ENCODE measurements at regions of chr1 and their contacts with region 1.

Region 1: DNA sequence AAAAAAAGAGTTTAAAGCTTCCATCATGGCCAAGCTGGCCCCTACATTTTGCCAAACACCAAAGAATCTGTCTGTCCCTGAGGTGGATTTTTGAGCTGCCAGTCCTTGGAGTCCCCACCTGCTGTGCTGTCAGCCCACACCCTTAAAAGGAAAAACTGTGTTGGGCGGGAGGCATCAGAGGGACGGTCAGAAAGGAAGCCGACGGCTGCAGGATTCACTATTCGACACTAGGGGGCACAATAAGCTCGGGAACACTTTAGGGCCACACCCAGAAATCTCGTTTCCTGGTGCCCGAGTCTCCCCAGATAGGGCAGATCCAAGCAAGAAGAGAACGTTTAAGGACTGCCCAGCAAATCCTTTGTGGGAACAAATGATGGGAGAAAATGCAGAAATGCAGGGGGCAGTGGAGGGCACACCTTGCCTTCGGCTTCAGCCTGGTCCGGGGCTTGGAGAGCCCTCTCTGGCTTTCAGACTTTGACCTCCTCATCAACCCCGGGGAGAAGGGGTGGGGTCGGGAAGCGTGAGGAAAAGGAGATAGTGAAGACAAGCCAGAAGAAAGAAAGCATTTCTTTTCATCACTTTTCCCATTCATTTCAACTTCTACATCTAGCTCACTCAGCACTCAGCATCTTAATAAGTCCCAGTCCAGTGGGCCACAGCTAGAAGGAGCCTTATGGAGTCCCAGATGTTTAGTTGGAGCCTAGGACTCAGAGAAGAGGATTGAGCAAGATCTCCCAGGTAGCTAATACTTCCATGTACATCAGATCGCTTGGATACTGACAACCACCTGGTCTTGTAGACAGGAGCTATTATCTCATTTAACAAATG is 5.0 kb upstream of the CTTNBP2NL start:
- DNase-seq: peak; percentile 85 to 86
- H3K4me3 ChIP-seq: peak overlapping the region; percentile 40
- H3K4me3 Mint-ChIP-seq: peak overlapping the region; percentile 92
- H3K27ac Mint-ChIP-seq: peak overlapping the region; percentile 73
- H3K4me1 ChIP-seq: peaks cover 13% of the 10 kb centered on the region
- H3K4me1 Mint-ChIP-seq: peaks cover 14% of the 10 kb centered on the region
- H3K27me3 ChIP-seq: no peaks in the 10 kb centered on the region
- H3K27me3 Mint-ChIP-seq: no peaks in the 10 kb centered on the region
- CTCF ChIP-seq: peak; percentile 57 to 72

Region 2: DNA sequence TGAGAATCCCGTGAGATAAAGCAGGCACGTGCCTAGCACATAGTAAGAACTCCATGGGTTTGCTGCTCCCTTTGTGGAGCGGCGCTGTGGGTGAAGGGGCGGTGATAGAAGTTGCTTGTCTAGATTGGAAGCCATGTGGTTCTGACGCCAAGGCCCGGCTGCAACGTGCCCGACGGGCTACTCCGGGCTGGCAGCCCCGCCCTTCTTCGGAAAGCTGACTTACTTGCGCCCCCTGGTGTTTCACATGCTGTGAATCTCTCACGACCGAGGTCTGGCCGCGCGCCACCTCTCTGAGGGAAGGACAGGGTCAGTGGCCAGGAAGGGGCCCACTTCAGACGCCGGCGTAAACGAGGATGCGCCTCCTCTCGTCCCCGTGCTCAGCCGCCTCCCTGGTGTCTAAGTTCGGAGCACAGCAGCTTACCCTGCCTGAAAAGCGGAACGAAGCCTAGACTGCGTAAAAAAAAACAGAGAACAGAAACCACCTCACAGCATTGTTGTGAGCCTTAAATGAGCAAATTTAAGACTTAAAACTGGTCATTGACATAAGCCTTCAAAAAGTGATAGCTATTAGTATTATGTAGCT is 75.2 kb after region 1 on chr1:
- CTCF ChIA-PET with region 1: interaction called, 7 read pairs
- POLR2A ChIA-PET with region 1: no interaction called
- intact Hi-C with region 1: loop called (anchors 1 kb)
- DNase-seq: peak; percentile 87 to 90
- H3K4me3 ChIP-seq: peak overlapping the region; percentile 21; the same call in 1 of the 2 replicates
- H3K4me3 Mint-ChIP-seq: peak overlapping the region; percentile 61
- H3K27ac Mint-ChIP-seq: no peak overlapping the region
- H3K4me1 ChIP-seq: peaks cover 5% of the 10 kb centered on the region; the same call in 1 of the 2 replicates
- H3K4me1 Mint-ChIP-seq: peaks cover 8% of the 10 kb centered on the region
- H3K27me3 ChIP-seq: no peaks in the 10 kb centered on the region
- H3K27me3 Mint-ChIP-seq: no peaks in the 10 kb centered on the region
- CTCF ChIP-seq: peak; percentile 67 to 76

Region 3: GRCh38 chr1:112614460-112615065 is 223.6 kb after region 1 on chr1:
- CTCF ChIA-PET with region 1: interaction called, 3 read pairs
- POLR2A ChIA-PET with region 1: no interaction called
- intact Hi-C with region 1: loop called (anchors 1 kb)
- DNase-seq: peak in 1 of 2 experiments; percentile 27
- H3K4me3 ChIP-seq: no peak overlapping the region
- H3K4me3 Mint-ChIP-seq: no peak overlapping the region
- H3K27ac Mint-ChIP-seq: no peak overlapping the region
- H3K4me1 ChIP-seq: no peaks in the 10 kb centered on the region
- H3K4me1 Mint-ChIP-seq: no peaks in the 10 kb centered on the region
- H3K27me3 ChIP-seq: no peaks in the 10 kb centered on the region
- H3K27me3 Mint-ChIP-seq: no peaks in the 10 kb centered on the region
- CTCF ChIP-seq: peak; percentile 34 to 47

Region 4: DNA sequence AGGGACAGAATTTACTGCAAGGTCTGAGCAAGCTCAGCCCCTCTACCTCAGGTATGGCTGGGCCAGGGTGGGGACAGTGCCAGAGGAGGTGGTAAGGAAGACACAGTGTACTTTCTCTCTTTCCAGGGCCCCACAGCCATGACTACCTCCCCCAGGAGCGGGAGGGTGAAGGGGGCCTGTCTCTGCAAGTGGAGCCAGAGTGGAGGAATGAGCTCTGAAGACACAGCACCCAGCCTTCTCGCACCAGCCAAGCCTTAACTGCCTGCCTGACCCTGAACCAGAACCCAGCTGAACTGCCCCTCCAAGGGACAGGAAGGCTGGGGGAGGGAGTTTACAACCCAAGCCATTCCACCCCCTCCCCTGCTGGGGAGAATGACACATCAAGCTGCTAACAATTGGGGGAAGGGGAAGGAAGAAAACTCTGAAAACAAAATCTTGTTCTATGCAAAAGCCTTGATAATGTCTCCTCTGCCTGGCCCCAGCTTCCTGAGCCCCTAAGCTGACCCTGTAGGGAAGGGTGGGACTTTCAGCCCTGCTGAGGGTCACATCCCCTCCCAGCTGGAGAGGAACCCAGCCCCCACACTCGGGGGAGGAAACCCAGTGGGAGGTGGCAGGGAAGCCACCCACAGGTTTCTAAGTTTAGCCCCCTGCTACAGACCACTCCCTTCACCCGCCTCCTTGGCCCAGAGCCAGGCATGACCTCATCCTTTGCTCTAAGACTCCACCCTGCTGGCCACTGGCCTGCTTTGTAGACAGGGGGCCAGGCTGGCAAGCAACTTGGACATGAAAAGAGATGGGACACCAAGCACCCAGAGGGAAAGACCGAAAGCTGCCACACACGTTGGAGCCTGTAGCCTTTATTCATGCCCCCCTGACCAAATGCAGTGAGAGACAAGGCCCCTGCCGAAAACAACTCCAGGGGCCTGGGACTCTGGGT is 309.6 kb after region 1 on chr1:
- CTCF ChIA-PET with region 1: interaction called, 4 read pairs
- POLR2A ChIA-PET with region 1: interaction called, 3 read pairs
- intact Hi-C with region 1: loop called (anchors 2 kb)
- DNase-seq: peak; percentile 57 to 79
- H3K4me3 ChIP-seq: no peak overlapping the region
- H3K4me3 Mint-ChIP-seq: no peak overlapping the region
- H3K27ac Mint-ChIP-seq: peak overlapping the region; percentile 72
- H3K4me1 ChIP-seq: peaks cover 61% of the 10 kb centered on the region
- H3K4me1 Mint-ChIP-seq: peaks cover 27% of the 10 kb centered on the region
- H3K27me3 ChIP-seq: no peaks in the 10 kb centered on the region
- H3K27me3 Mint-ChIP-seq: no peaks in the 10 kb centered on the region
- CTCF ChIP-seq: no peak

Region 5: GRCh38 chr1:112706908-112707663 is 316.1 kb after region 1 on chr1 and contains the start of gene RHOC:
- CTCF ChIA-PET with region 1: interaction called, 4 read pairs
- POLR2A ChIA-PET with region 1: interaction called, 3 read pairs
- intact Hi-C with region 1: loop called (anchors 1 kb)
- DNase-seq: peak; percentile 89
- H3K4me3 ChIP-seq: peak within 1 kb of the TSS; percentile 84
- H3K4me3 Mint-ChIP-seq: peak within 1 kb of the TSS; percentile 88
- H3K27ac Mint-ChIP-seq: peak within 1 kb of the TSS; percentile 69
- H3K4me1 ChIP-seq: peaks cover 29% of the 10 kb centered on the region
- H3K4me1 Mint-ChIP-seq: peaks cover 11% of the 10 kb centered on the region
- H3K27me3 ChIP-seq: no peaks in the 10 kb centered on the region
- H3K27me3 Mint-ChIP-seq: no peaks in the 10 kb centered on the region
- CTCF ChIP-seq: peak; percentile 74 to 82
- total RNA-seq, gene RHOC: 128 and 134 TPM in 2 replicates

Measured in Caco-2 (cell line).